B cell (primary cell): ENCODE measurements at regions of chr3 and their contacts with region 1.

Region 1: DNA sequence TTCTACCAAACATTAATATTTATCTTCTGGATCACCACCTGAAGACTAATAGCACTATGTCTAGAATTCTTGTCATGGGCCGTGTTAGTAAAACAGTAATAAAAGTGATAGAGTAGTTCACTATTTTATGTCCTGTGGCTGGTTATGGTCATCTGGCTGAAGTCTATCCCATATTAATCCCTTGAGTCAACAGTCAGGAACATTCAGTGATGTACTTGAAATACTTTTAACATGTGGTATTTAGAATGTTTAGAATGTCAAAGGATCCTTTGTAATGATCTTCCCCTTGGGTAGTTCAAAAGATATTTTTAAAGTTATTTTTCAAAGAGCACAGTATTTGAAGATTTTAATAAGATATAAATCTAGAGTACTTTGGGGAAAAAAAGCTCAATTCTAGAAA is 117.0 kb downstream of the MBNL1 start:
- DNase-seq: no peak
- ATAC-seq: no peak
- H3K4me3 ChIP-seq: no peak overlapping the region
- H3K4me3 Mint-ChIP-seq: no peak overlapping the region
- H3K27ac ChIP-seq: peak overlapping the region in 1 of 2 donors; percentile 53
- H3K27ac Mint-ChIP-seq: no peak overlapping the region
- H3K4me1 ChIP-seq: peaks cover 18 to 37% of the 10 kb centered on the region in 2 donors
- H3K4me1 Mint-ChIP-seq: peaks cover 67% of the 10 kb centered on the region
- H3K27me3 ChIP-seq: no peaks in the 10 kb centered on the region
- H3K27me3 Mint-ChIP-seq: no peaks in the 10 kb centered on the region
- CTCF ChIP-seq: no peak

Region 2: DNA sequence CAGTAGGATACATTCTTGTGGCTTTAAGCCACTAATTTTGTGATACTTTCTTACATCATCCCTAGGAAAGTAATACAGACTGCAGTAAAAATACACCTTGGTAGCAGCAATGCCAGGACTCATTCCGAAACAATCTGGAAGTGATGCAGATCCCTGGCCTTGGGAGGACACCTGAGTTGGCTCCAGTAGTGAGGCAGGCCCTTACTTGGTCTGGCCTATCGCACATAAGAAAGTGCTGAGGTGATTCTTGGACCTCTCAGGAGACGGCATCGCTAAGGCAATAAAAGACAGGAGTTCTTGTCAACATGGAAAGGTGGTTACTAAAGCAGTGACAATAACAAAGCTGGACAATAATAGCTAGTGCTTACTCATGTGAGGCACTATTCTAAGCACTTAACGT is 385.8 kb before region 1 on chr3:
- CTCF ChIA-PET with region 1: no interaction called
- POLR2A ChIA-PET with region 1: interaction called, 10 read pairs
- intact Hi-C with region 1: no loop called
- DNase-seq: no peak
- ATAC-seq: no peak
- H3K4me3 ChIP-seq: no peak overlapping the region
- H3K4me3 Mint-ChIP-seq: no peak overlapping the region
- H3K27ac ChIP-seq: no peak overlapping the region
- H3K27ac Mint-ChIP-seq: no peak overlapping the region
- H3K4me1 ChIP-seq: no peaks in the 10 kb centered on the region
- H3K4me1 Mint-ChIP-seq: no peaks in the 10 kb centered on the region
- H3K27me3 ChIP-seq: no peaks in the 10 kb centered on the region
- H3K27me3 Mint-ChIP-seq: peaks cover 12% of the 10 kb centered on the region
- CTCF ChIP-seq: no peak

Region 3: GRCh38 chr3:152319831-152320617 is 65.7 kb before region 1 on chr3:
- CTCF ChIA-PET with region 1: no interaction called
- POLR2A ChIA-PET with region 1: no interaction called
- intact Hi-C with region 1: no loop called
- DNase-seq: no peak
- ATAC-seq: no peak
- H3K4me3 ChIP-seq: no peak overlapping the region
- H3K4me3 Mint-ChIP-seq: no peak overlapping the region
- H3K27ac ChIP-seq: peak overlapping the region in 1 of 2 donors; percentile 11
- H3K27ac Mint-ChIP-seq: no peak overlapping the region
- H3K4me1 ChIP-seq: peaks cover 32 to 58% of the 10 kb centered on the region in 2 donors
- H3K4me1 Mint-ChIP-seq: peaks cover 72% of the 10 kb centered on the region
- H3K27me3 ChIP-seq: no peaks in the 10 kb centered on the region
- H3K27me3 Mint-ChIP-seq: no peaks in the 10 kb centered on the region
- CTCF ChIP-seq: no peak

Region 4: GRCh38 chr3:152436707-152437590 is 51.2 kb after region 1 on chr3:
- CTCF ChIA-PET with region 1: no interaction called
- POLR2A ChIA-PET with region 1: interaction called, 4 read pairs
- intact Hi-C with region 1: loop called (anchors 5 kb)
- DNase-seq: no peak
- ATAC-seq: no peak
- H3K4me3 ChIP-seq: no peak overlapping the region
- H3K4me3 Mint-ChIP-seq: no peak overlapping the region
- H3K27ac ChIP-seq: peak overlapping the region in 1 of 2 donors; percentile 55
- H3K27ac Mint-ChIP-seq: peak overlapping the region; percentile 50
- H3K4me1 ChIP-seq: peaks cover 0 to 12% of the 10 kb centered on the region in 2 donors
- H3K4me1 Mint-ChIP-seq: peaks cover 56% of the 10 kb centered on the region
- H3K27me3 ChIP-seq: no peaks in the 10 kb centered on the region
- H3K27me3 Mint-ChIP-seq: no peaks in the 10 kb centered on the region
- CTCF ChIP-seq: no peak